MCF 10A (cell line): ENCODE measurements at regions of chr18 and their contacts with region 1.

Region 1: GRCh38 chr18:3665780-3666525 is 216.0 kb downstream of the TGIF1 start:
- DNase-seq: peak; percentile 91
- H3K4me3 Mint-ChIP-seq: no peak overlapping the region
- H3K27ac Mint-ChIP-seq: peak overlapping the region; percentile 72
- H3K4me1 Mint-ChIP-seq: peaks cover 15% of the 10 kb centered on the region
- H3K27me3 Mint-ChIP-seq: no peaks in the 10 kb centered on the region
- CTCF ChIP-seq: peak; percentile 91

Region 2: DNA sequence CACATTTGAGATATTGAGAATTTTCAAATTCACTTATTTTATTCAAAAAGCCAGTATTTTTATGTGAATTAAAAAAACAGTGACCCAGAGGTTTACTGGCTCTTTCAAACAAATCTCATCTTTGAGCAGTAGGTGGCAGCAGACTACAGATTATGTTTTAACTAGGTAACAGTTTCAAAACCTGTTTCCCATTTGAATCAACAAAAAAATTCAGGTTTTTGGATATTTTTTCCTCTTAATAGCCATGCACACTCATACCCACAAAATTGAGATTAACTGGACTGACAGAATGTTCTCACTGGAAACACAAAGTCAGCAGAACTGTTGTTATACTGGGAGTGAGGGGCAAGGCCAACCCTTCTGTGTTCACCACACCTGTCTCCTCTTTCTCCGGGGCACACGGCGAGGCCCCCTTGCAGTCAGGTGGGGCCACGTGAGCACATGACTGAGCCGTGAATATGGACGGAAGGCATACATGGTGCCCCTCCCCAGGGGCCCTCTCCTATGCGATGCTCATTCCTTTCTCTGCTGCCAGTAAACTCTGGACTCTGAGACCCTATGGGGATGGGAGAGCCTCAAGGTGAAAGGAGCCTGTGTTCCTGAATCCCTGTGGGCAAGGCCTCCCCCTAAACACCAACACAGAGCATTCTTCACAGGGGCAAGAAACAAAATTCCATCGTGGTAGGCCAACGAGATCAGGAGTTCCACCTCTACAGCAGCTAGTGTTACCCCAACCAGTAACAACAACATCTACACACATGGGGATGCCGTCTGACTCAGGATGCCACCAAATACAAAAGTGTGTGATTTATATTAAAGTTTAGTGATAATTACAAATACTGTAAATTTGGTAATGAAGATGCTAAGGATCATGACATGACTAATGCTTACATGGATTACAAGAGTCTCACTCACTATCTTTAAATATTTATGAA is 733.4 kb before region 1 on chr18:
- CTCF ChIA-PET with region 1: interaction called, 5 read pairs
- POLR2A ChIA-PET with region 1: no interaction called
- intact Hi-C with region 1: loop called (anchors 5 kb)
- DNase-seq: peak; percentile 71
- H3K4me3 Mint-ChIP-seq: no peak overlapping the region
- H3K27ac Mint-ChIP-seq: no peak overlapping the region
- H3K4me1 Mint-ChIP-seq: peaks cover 10% of the 10 kb centered on the region
- H3K27me3 Mint-ChIP-seq: no peaks in the 10 kb centered on the region
- CTCF ChIP-seq: peak; percentile 69

Region 3: GRCh38 chr18:3088449-3088848 is 577.5 kb before region 1 on chr18:
- CTCF ChIA-PET with region 1: no interaction called
- POLR2A ChIA-PET with region 1: no interaction called
- intact Hi-C with region 1: no loop called
- DNase-seq: peak; percentile 24
- H3K4me3 Mint-ChIP-seq: no peak overlapping the region
- H3K27ac Mint-ChIP-seq: no peak overlapping the region
- H3K4me1 Mint-ChIP-seq: peaks cover 14% of the 10 kb centered on the region
- H3K27me3 Mint-ChIP-seq: no peaks in the 10 kb centered on the region
- CTCF ChIP-seq: no peak

Region 4: DNA sequence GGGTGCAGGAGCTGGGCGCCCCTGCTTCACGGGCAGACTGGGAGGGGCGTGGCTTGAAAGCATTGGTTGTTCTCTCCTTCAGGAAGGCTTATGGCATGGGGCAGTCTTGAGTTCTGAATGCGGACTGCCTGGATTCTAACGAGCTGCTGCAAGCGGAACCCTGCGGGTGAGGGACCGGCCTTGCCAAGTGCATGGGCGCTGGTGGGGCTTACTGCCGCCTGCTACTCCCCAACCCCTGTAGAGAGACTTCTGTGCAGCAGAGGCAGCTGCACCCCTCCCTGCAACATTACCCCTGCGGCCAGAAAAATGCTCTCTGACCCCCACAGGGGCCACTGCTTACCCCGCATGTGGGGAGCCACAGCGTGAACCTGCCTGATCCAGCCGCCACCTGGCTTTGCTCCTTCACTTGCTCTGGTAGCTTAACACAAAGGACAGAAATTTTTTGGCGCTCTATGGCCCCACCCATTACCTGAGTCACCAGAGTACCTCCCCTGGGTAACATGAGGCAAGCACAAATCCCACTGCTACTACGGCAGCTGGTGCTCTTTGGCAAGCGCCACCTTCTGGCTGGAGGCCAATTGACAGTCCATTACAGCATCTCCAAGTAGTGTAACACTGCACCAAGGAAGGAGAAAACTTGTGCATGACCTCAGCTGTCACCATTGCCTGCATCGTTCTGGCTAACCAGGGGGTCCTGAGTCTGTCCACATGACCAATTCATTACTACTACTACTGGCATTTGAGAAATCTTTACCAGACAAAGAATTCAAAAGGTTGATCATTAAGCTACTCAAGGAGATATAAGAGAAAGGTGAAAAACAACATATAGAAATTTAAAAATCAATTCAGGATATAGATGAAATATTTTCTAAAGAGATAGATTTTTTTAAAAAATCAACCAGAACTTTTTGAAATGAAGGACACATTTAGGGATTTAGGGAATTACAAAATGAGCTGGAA is 368.6 kb before region 1 on chr18:
- CTCF ChIA-PET with region 1: interaction called, 25 read pairs
- POLR2A ChIA-PET with region 1: interaction called, 20 read pairs
- intact Hi-C with region 1: no loop called
- DNase-seq: peak; percentile 97
- H3K4me3 Mint-ChIP-seq: peak overlapping the region; percentile 95
- H3K27ac Mint-ChIP-seq: peak overlapping the region; percentile 47
- H3K4me1 Mint-ChIP-seq: peaks cover 5% of the 10 kb centered on the region
- H3K27me3 Mint-ChIP-seq: no peaks in the 10 kb centered on the region
- CTCF ChIP-seq: peak; percentile 36

Region 5: GRCh38 chr18:3466045-3466444 is 199.9 kb before region 1 on chr18:
- CTCF ChIA-PET with region 1: interaction called, 15 read pairs
- POLR2A ChIA-PET with region 1: interaction called, 7 read pairs
- intact Hi-C with region 1: no loop called
- DNase-seq: peak; percentile 77
- H3K4me3 Mint-ChIP-seq: no peak overlapping the region
- H3K27ac Mint-ChIP-seq: no peak overlapping the region
- H3K4me1 Mint-ChIP-seq: peaks cover 13% of the 10 kb centered on the region
- H3K27me3 Mint-ChIP-seq: no peaks in the 10 kb centered on the region
- CTCF ChIP-seq: no peak

Region 6: GRCh38 chr18:3604498-3605408 is 61.2 kb before region 1 on chr18:
- CTCF ChIA-PET with region 1: interaction called, 33 read pairs
- POLR2A ChIA-PET with region 1: interaction called, 90 read pairs
- intact Hi-C with region 1: loop called (anchors 1 kb)
- DNase-seq: peak; percentile 91
- H3K4me3 Mint-ChIP-seq: no peak overlapping the region
- H3K27ac Mint-ChIP-seq: no peak overlapping the region
- H3K4me1 Mint-ChIP-seq: no peaks in the 10 kb centered on the region
- H3K27me3 Mint-ChIP-seq: no peaks in the 10 kb centered on the region
- CTCF ChIP-seq: no peak

Region 7: GRCh38 chr18:3869848-3870247 is 203.9 kb after region 1 on chr18:
- CTCF ChIA-PET with region 1: interaction called, 11 read pairs
- POLR2A ChIA-PET with region 1: no interaction called
- intact Hi-C with region 1: no loop called
- DNase-seq: peak; percentile 68
- H3K4me3 Mint-ChIP-seq: no peak overlapping the region
- H3K27ac Mint-ChIP-seq: no peak overlapping the region
- H3K4me1 Mint-ChIP-seq: no peaks in the 10 kb centered on the region
- H3K27me3 Mint-ChIP-seq: peaks cover 21% of the 10 kb centered on the region
- CTCF ChIP-seq: peak; percentile 65

Region 8: DNA sequence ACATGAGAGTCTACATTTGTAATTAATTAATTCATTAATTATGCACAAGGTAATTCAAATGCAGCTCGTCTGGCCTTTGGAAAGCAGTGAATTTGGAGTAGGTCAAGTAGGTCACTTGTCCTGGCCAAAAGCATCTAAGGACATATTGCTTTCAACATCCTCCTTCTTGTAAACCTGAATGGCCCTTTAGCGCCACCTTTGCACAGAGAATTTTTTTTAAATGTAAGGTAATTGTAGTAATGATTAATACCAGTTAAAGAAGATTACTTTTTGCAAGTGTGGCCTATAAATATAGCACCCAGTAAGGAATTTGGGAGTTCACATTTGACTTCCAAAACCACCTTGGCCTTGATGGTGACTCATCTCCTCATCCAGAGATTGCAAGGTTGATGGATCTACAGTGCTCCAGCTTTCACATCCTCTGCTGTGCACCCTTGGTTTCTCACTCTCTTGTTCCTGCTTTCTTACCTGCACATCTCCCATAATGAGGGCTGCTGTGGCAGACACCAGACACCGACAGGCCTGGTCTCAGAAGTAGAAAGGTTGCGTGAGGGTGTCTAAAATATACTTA is 265.7 kb after region 1 on chr18:
- CTCF ChIA-PET with region 1: no interaction called
- POLR2A ChIA-PET with region 1: no interaction called
- intact Hi-C with region 1: no loop called
- DNase-seq: no peak
- H3K4me3 Mint-ChIP-seq: no peak overlapping the region
- H3K27ac Mint-ChIP-seq: no peak overlapping the region
- H3K4me1 Mint-ChIP-seq: peaks cover under 1% of the 10 kb centered on the region
- H3K27me3 Mint-ChIP-seq: no peaks in the 10 kb centered on the region
- CTCF ChIP-seq: no peak